Psoas muscle (tissue), 8 donors: ENCODE measurements at regions of chr2 and their contacts with region 1.

Region 1: GRCh38 chr2:64644177-64645004 is 9.3 kb downstream of the SERTAD2 start:
- DNase-seq: peak; percentile 77 to 87
- ATAC-seq: peak; percentile 75 to 84 (median 80)
- H3K4me3 ChIP-seq: peak overlapping the region; percentile 69
- H3K27ac ChIP-seq: peak overlapping the region; percentile 98
- H3K4me1 ChIP-seq: peaks cover 64% of the 10 kb centered on the region
- H3K27me3 ChIP-seq: no peaks in the 10 kb centered on the region
- CTCF ChIP-seq: no peak

Region 2: GRCh38 chr2:64609227-64609941 is 35.0 kb before region 1 on chr2:
- intact Hi-C with region 1: loop called in 1 of 2 experiments (anchors 5 kb)
- DNase-seq: peak; percentile 66 to 86
- ATAC-seq: peak; percentile 80 to 87 (median 82)
- H3K4me3 ChIP-seq: peak overlapping the region; percentile 82
- H3K27ac ChIP-seq: peak overlapping the region; percentile 84
- H3K4me1 ChIP-seq: peaks cover 3% of the 10 kb centered on the region
- H3K27me3 ChIP-seq: no peaks in the 10 kb centered on the region
- CTCF ChIP-seq: peak; percentile 67

Region 3: DNA sequence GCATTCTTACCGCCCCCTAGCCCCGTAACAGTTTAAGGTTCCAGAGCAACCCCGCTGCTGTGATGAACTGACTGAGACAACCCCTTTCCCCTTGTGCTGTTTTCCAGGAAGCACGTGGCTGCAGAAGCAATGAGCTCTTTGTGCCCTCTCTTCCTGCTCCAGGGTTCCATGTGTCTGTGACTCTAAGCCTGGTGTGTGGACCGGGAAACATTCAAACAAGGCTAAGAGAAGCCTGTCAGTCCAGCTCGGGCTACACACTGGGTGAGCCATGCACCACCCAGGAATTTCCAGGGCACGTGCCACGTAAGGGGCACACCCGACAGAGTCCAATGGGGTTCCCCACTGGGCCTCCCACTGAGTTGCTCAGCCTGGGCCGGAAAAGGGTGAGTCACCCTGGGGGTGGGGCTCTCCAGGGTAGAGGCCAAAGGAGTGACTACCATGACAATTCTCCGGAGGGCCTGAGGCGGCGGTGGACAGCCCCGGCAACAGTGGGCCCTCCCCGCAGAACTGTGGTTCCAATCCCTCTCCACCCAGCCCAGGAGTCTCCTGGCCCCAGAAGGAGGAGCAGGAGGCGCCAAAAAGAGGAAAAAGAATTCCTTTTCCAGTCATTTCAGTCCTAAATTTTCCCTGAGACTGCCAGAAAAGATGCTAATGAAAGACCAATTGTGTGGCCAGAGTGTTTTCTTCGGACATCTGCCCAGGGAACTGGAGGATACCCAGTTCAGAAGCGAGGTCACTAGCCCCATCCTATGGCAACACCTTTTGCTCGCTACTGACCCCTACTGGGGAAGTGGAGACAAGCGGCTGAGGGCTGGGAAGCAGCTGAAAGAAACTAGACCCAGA is 187.0 kb after region 1 on chr2:
- intact Hi-C with region 1: loop called in 1 of 2 experiments (anchors 10 kb)
- DNase-seq: peak; percentile 91 to 93
- ATAC-seq: peak; percentile 85 to 93 (median 90)
- H3K4me3 ChIP-seq: no peak overlapping the region
- H3K27ac ChIP-seq: peak overlapping the region; percentile 53
- H3K4me1 ChIP-seq: peaks cover 8% of the 10 kb centered on the region
- H3K27me3 ChIP-seq: no peaks in the 10 kb centered on the region
- CTCF ChIP-seq: peak; percentile 78